ENCODE measurements at regions of chr7 and their contacts with region 1.

Region 1: DNA sequence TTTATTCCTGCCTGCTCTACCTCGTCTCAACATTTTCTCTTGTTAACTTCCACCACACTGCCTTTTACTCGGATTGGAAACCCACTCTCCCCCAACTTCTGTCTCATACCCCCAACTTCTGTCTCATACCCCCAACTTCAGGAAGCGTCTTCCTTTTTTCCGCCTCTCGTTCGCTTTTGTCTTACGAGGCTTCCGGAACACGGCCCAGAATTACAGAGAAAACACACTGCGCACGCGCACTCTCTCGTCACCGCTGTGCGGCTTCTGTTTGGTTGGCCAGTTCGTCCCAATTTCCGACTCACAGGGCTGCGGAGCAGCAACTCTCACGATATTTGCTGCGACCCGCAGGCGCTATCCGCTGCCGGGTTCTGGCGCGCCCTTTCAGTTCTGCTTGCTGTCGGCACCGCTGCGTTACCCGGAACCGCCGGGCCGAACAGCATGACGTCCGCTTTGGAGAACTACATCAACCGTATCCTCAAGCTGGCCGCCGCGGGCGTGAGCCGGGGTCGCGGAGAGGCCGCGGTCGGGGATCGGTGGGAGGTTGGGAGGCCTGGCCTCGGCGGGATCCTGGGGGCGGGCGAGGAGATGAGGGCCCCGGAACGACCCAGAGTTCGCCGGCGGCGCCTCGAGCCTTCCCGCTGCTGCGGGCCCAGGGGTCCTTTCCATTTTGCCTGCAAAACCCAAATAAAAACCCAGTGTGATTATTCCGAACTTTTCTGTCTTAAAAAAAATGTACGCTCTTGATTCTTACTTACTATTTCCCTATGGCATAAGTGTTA is at the start of gene LSM8:
- DNase-seq: peak; percentile 97
- H3K4me3 Mint-ChIP-seq: peak within 1 kb of the TSS; percentile 97
- H3K27ac Mint-ChIP-seq: peak within 1 kb of the TSS; percentile 99
- H3K4me1 Mint-ChIP-seq: peaks cover 40% of the 10 kb centered on the region
- H3K27me3 Mint-ChIP-seq: no peaks in the 10 kb centered on the region
- total RNA-seq, gene LSM8: 45.9 and 46.7 TPM in 2 replicates

Region 2: DNA sequence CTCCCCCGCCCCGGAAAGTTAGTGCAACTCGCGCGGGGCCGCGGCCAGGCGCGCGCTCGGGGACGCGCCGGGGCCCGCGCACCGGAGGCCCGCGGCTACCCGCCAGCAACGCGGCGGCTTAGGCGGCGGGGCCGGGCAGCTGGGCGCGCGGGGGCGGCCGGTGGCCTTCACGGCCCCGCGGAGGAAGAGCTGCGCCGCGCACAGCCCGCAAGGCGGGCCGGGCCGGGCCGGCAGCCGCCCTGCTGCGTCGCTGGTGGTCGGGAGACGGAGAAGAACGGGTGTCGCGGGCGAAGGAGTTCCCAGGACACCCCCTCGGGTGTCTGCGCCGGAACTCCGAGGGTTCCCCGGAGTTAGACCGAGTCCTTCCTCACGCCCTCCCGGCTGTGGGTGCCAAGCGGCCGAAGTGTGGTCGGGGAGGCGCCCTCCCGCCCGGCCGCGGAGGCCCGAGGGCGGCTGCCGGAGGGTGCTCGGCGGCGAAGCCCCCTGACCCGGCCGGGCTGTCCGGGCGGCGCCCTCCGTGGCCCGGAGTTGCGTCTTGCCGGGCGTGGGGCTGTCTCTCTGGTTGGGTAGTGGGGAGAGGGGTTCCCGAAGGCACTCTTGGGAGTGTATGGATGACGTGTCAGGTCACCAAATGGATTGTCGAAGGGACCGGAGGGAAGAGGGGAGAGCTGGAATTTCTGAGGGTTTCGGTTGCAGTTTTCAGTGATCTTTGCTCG is 1230.1 kb before region 1 on chr7:
- intact Hi-C with region 1: loop called (anchors 5 kb)
- DNase-seq: no peak
- H3K4me3 Mint-ChIP-seq: peak overlapping the region; percentile 93
- H3K27ac Mint-ChIP-seq: peak overlapping the region; percentile 87
- H3K4me1 Mint-ChIP-seq: peaks cover 12% of the 10 kb centered on the region
- H3K27me3 Mint-ChIP-seq: peaks cover 12% of the 10 kb centered on the region

Region 3: DNA sequence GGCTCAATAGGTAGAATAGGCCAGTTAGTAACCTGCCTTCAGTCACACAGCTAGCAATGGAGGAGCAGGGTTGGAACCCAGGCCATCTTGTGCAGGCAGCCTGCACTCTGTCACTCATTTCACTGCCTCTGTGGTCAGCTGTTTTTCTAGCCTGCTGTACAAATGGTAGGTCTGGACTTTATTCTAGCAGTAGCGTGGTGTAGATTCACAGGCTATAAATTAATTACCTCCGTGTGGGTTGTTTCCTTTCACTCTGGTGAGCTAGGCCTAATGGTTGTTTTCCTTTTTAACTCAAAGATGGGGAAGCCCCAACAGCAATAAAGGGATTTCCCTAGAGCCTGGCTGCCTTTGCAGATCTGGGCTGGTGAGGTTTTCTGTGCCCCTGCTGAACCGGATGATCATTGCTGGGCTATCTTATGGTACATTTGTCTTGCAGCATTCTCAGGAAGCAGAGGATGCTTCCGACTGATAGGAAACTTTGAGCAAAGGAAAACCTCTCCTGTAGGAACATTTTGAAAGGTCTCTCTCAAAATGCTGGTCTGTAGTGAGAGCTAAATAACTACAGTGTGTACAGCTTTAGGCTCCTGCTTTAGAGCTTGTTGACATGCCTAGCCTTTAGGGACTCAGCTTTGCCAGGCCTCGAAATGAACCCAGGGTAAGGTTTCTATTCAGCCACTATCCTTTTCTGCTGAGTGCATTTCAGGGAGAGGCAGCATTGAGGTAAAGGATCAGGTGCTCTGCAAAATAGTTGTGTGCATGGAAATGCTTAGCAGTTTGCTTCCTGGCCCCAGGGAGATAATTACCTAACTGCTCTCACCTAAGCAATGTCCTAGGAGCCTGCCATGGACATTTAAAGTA is 1073.3 kb before region 1 on chr7:
- intact Hi-C with region 1: loop called (anchors 2 kb)
- DNase-seq: peak; percentile 30
- H3K4me3 Mint-ChIP-seq: peak overlapping the region; percentile 37
- H3K27ac Mint-ChIP-seq: peak overlapping the region; percentile 15
- H3K4me1 Mint-ChIP-seq: peaks cover 21% of the 10 kb centered on the region
- H3K27me3 Mint-ChIP-seq: peaks cover 26% of the 10 kb centered on the region

Region 4: DNA sequence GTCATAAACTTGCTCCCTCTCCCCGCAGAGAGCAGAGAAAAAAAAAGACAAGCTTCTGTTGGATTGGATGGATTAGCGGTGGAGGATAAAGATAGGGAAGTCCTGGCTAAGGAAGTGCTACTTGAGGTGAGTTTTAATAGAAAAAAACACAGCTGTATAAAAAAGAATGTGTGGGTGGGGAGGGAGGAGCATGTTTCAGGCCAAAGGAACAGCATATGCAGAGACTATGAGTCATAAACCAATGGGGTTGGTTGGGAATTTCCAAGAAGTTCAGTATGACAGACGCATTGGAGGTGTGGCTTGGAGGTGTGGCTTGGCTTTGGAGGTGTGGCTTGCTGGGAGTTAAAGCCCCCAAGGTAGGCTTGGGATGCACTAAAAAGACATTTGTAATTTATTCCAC is 103.0 kb before region 1 on chr7:
- intact Hi-C with region 1: loop called (anchors 2 kb)
- DNase-seq: peak; percentile 31
- H3K4me3 Mint-ChIP-seq: peak overlapping the region; percentile 11
- H3K27ac Mint-ChIP-seq: peak overlapping the region; percentile 73
- H3K4me1 Mint-ChIP-seq: peaks cover 21% of the 10 kb centered on the region
- H3K27me3 Mint-ChIP-seq: peaks cover 3% of the 10 kb centered on the region

Region 5: GRCh38 chr7:118195837-118196474 is 12.0 kb after region 1 on chr7:
- intact Hi-C with region 1: loop called (anchors 1 kb)
- DNase-seq: peak; percentile 21
- H3K4me3 Mint-ChIP-seq: no peak overlapping the region
- H3K27ac Mint-ChIP-seq: no peak overlapping the region
- H3K4me1 Mint-ChIP-seq: peaks cover 9% of the 10 kb centered on the region
- H3K27me3 Mint-ChIP-seq: no peaks in the 10 kb centered on the region

Region 6: DNA sequence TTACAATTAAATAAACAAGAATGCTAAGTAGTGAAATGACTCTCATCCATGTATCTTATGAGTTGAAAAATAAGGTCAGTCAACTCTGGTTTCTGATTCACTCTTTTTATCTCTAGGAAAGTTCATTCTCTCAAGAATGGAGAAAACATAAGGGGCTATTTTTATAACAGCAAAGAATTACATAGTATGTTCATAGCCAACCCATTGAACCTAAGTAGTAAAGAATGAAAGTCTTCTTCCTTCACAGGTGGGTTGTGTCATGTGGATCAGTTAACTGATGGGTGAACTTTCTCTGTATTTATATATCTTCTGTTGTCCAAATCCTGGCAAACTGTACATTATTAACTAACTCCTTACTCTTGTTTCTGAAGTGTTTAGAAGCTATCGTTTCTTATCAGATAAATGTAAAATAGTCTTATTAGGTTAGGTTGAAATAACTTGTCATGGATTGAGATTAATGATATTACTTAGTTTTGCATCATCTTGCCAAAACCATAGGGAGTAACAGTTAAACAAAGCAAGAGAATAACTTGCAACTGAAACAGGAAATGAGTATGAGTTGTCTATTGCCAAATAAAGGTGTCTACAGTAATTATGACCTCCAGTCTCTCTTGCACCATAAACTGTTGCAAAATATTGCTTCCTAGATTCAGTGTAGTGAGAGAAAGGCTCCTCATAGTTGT is 127.3 kb after region 1 on chr7:
- intact Hi-C with region 1: loop called (anchors 5 kb)
- DNase-seq: no peak
- H3K4me3 Mint-ChIP-seq: no peak overlapping the region
- H3K27ac Mint-ChIP-seq: peak overlapping the region; percentile 78
- H3K4me1 Mint-ChIP-seq: peaks cover 35% of the 10 kb centered on the region
- H3K27me3 Mint-ChIP-seq: no peaks in the 10 kb centered on the region

Region 7: GRCh38 chr7:118802736-118803135 is 618.8 kb after region 1 on chr7:
- intact Hi-C with region 1: no loop called
- DNase-seq: no peak
- H3K4me3 Mint-ChIP-seq: no peak overlapping the region
- H3K27ac Mint-ChIP-seq: no peak overlapping the region
- H3K4me1 Mint-ChIP-seq: no peaks in the 10 kb centered on the region
- H3K27me3 Mint-ChIP-seq: no peaks in the 10 kb centered on the region